Heart left ventricle (tissue), 16 donors: ENCODE measurements at regions of chr1 and their contacts with region 1.

Region 1: DNA sequence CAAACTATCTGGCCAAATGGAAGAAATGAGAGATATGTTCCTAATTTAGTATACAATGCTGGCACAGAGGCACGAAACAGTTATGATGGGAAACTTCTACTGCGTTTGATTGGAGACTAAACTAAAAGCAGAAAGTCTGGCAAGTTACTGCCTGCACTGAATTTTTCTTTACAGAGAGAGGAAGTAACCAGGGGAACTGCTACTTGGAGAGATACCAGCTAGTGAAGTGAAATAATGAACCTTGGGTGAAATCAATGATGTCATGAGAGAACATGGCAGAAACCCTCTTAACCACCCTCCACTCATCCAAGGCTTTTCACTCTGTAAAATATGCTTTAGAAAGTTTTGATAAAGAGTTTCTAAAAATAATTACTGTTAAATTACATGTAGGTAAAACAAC is 29.3 kb downstream of the NIBAN1 start:
- DNase-seq: no peak
- ATAC-seq: peak; percentile 27 to 65 (median 54)
- H3K4me3 ChIP-seq: no peak overlapping the region
- H3K27ac ChIP-seq: peak overlapping the region in 11 of 12 donors; percentile 15 to 72 (median 62)
- H3K4me1 ChIP-seq: peaks cover 0 to 61% (median 48%) of the 10 kb centered on the region in 12 donors
- H3K27me3 ChIP-seq: no peaks in the 10 kb centered on the region
- CTCF ChIP-seq: no peak
- POLR2A ChIP-seq: no peak

Region 2: GRCh38 chr1:184870319-184870718 is 74.7 kb before region 1 on chr1:
- intact Hi-C with region 1: loop called in 1 of 10 experiments (anchors 10 kb)
- DNase-seq: no peak
- ATAC-seq: no peak
- H3K4me3 ChIP-seq: no peak overlapping the region
- H3K27ac ChIP-seq: no peak overlapping the region
- H3K4me1 ChIP-seq: peaks cover 0 to 42% (median 13%) of the 10 kb centered on the region in 12 donors
- H3K27me3 ChIP-seq: no peaks in the 10 kb centered on the region
- CTCF ChIP-seq: no peak
- POLR2A ChIP-seq: no peak

Region 3: GRCh38 chr1:184903111-184903692 is 41.8 kb before region 1 on chr1:
- intact Hi-C with region 1: loop called in 1 of 10 experiments (anchors 5 kb)
- DNase-seq: peak in 1 of 5 donors; percentile 31
- ATAC-seq: peak; percentile 37 to 60 (median 46)
- H3K4me3 ChIP-seq: no peak overlapping the region
- H3K27ac ChIP-seq: peak overlapping the region in 9 of 12 donors; percentile 9 to 48 (median 27)
- H3K4me1 ChIP-seq: peaks cover 4 to 70% (median 40%) of the 10 kb centered on the region in 12 donors
- H3K27me3 ChIP-seq: no peaks in the 10 kb centered on the region
- CTCF ChIP-seq: no peak
- POLR2A ChIP-seq: no peak

Region 4: GRCh38 chr1:184986235-184986634 is 41.2 kb after region 1 on chr1:
- intact Hi-C with region 1: no loop called
- DNase-seq: no peak
- ATAC-seq: no peak
- H3K4me3 ChIP-seq: no peak overlapping the region
- H3K27ac ChIP-seq: no peak overlapping the region
- H3K4me1 ChIP-seq: peaks cover 0 to 16% (median 0%) of the 10 kb centered on the region in 12 donors
- H3K27me3 ChIP-seq: no peaks in the 10 kb centered on the region
- CTCF ChIP-seq: peak in 6 of 12 donors; percentile 4 to 39 (median 27)
- POLR2A ChIP-seq: no peak